ENCODE measurements at regions of chr1 and their contacts with region 1.

Region 1: GRCh38 chr1:32107742-32108661 is at the start of gene KPNA6:
- DNase-seq: peak; percentile 93 to 95 (median 94)
- H3K4me3 ChIP-seq: peak within 1 kb of the TSS; percentile 67 to 83
- H3K4me3 Mint-ChIP-seq: peak within 1 kb of the TSS; percentile 96 to 100 (median 100)
- H3K27ac ChIP-seq: peak within 1 kb of the TSS; percentile 94
- H3K27ac Mint-ChIP-seq: peak within 1 kb of the TSS; percentile 93 to 100 (median 97)
- H3K4me1 ChIP-seq: peaks cover 47% of the 10 kb centered on the region
- H3K4me1 Mint-ChIP-seq: peaks cover 31 to 62% (median 45%) of the 10 kb centered on the region in 4 donors
- H3K27me3 ChIP-seq: no peaks in the 10 kb centered on the region
- H3K27me3 Mint-ChIP-seq: no peaks in the 10 kb centered on the region
- total RNA-seq, gene KPNA6: 60.3 to 62.5 TPM

Region 2: DNA sequence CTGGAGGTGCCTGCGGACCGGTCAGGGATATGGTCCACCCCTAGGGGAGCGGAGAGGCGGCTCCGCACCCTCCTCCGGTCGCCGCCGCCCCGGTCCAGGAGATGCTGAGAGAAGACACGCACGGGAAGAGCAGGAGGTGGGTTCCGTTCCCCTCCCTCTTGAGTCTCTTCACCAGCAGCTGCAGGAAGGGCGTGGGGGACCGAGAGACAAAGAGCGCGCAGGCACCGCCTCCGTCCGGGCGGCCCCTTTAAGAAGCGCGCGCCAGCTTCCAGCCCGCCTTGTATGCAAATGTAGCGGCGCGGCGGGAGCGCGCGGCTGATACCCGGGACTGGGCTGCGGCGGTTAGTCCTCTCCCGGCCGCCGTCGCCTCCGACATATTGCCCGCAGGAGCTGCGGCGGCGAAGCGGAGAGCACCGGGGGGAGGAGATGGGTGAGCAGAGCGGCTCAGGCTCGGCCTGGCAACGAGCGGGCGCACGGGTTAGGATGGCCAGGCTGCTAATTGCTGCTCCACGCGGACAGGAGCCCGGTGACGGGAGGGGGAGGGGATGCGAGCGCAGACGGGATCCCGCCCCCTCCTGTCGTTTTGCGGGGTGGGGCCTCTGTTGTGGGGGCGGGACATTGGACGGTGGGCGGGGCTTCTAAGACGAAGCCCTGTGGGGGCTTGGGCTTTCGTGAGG is 35.2 kb before region 1 on chr1 and contains the start of gene TMEM39B:
- CTCF ChIA-PET with region 1: interaction called, 32 read pairs
- POLR2A ChIA-PET with region 1: interaction called, 63 read pairs
- intact Hi-C with region 1: loop called (anchors 1 kb)
- DNase-seq: peak; percentile 94 to 97 (median 96)
- H3K4me3 ChIP-seq: peak within 1 kb of the TSS; percentile 95
- H3K4me3 Mint-ChIP-seq: peak within 1 kb of the TSS; percentile 84 to 98 (median 92)
- H3K27ac ChIP-seq: peak within 1 kb of the TSS; percentile 73
- H3K27ac Mint-ChIP-seq: peak within 1 kb of the TSS; percentile 80 to 99 (median 97)
- H3K4me1 ChIP-seq: peaks cover 35% of the 10 kb centered on the region
- H3K4me1 Mint-ChIP-seq: peaks cover 26 to 52% (median 41%) of the 10 kb centered on the region in 4 donors
- H3K27me3 ChIP-seq: no peaks in the 10 kb centered on the region
- H3K27me3 Mint-ChIP-seq: no peaks in the 10 kb centered on the region
- total RNA-seq, gene TMEM39B: 18.4 to 19.1 TPM

Region 3: GRCh38 chr1:32179443-32180185 is 71.6 kb after region 1 on chr1 and contains the start of gene TXLNA:
- CTCF ChIA-PET with region 1: interaction called, 3 read pairs
- POLR2A ChIA-PET with region 1: interaction called, 23 read pairs
- intact Hi-C with region 1: loop called (anchors 1 kb)
- DNase-seq: peak; percentile 87 to 91 (median 88)
- H3K4me3 ChIP-seq: peak within 1 kb of the TSS; percentile 19 to 72
- H3K4me3 Mint-ChIP-seq: peak within 1 kb of the TSS; percentile 89 to 93 (median 92)
- H3K27ac ChIP-seq: peak within 1 kb of the TSS; percentile 83
- H3K27ac Mint-ChIP-seq: peak within 1 kb of the TSS; percentile 90 to 98 (median 96)
- H3K4me1 ChIP-seq: peaks cover 31% of the 10 kb centered on the region
- H3K4me1 Mint-ChIP-seq: peaks cover 24 to 53% (median 39%) of the 10 kb centered on the region in 4 donors
- H3K27me3 ChIP-seq: no peaks in the 10 kb centered on the region
- H3K27me3 Mint-ChIP-seq: no peaks in the 10 kb centered on the region
- total RNA-seq, gene TXLNA: 42.6 to 43.4 TPM

Region 4: DNA sequence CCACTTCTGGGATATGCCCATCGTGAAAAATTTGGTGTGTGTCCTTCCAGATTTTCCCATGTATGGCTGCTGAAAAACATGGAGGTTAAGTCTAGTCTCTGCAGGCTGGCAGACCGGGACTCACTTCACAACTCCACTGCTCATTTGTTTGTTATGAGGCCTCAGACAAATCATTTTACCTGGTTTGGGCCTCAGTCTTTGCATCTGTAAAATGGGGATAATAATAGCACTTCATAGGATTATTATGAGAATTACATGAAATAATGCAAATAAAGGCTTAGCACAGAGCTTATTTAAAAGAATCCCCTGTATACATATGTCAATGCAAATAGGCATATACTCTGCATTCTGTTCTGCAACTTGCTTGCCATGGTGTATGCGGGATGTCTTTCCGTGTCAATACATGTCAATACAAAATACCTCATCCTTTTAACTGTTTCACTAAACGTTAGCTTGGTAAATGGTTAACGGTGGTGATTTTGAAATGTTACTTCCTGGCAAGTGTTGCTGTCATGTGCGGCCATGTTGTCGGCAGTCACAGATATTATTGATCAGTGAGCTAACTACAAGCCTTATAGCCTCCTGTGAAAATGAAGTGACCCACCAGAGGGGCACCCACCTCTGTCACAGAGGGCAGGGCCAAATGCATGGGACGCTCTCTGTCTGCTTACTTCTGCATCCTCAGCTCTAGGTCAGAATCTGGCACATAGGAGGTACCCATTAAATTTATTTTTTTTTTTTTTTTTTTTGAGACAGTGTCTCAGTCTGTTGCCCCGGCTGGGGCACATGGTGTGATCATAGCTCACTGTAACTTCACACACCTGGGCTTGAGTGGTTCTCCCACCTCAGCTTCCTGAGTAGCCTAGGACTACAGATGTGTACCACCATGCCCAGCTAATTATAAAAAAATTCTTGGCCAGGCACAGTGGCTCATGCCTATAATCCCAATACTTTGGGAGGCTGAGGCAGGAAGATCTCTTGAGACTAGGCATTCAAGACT is 147.4 kb after region 1 on chr1:
- CTCF ChIA-PET with region 1: no interaction called
- POLR2A ChIA-PET with region 1: interaction called, 13 read pairs
- intact Hi-C with region 1: no loop called
- DNase-seq: peak in 3 of 5 donors; percentile 38 to 49 (median 46)
- H3K4me3 ChIP-seq: peak overlapping the region; percentile 15 to 95
- H3K4me3 Mint-ChIP-seq: peak overlapping the region; percentile 86 to 100 (median 92)
- H3K27ac ChIP-seq: peak overlapping the region; percentile 58
- H3K27ac Mint-ChIP-seq: peak overlapping the region; percentile 71 to 94 (median 91)
- H3K4me1 ChIP-seq: peaks cover 50% of the 10 kb centered on the region
- H3K4me1 Mint-ChIP-seq: peaks cover 30 to 77% (median 44%) of the 10 kb centered on the region in 4 donors
- H3K27me3 ChIP-seq: no peaks in the 10 kb centered on the region
- H3K27me3 Mint-ChIP-seq: no peaks in the 10 kb centered on the region

Measured in CD4-positive, alpha-beta memory T cell (primary cell).